H1 (cell line): ENCODE measurements at regions of chr2 and their contacts with region 1.

Region 1: DNA sequence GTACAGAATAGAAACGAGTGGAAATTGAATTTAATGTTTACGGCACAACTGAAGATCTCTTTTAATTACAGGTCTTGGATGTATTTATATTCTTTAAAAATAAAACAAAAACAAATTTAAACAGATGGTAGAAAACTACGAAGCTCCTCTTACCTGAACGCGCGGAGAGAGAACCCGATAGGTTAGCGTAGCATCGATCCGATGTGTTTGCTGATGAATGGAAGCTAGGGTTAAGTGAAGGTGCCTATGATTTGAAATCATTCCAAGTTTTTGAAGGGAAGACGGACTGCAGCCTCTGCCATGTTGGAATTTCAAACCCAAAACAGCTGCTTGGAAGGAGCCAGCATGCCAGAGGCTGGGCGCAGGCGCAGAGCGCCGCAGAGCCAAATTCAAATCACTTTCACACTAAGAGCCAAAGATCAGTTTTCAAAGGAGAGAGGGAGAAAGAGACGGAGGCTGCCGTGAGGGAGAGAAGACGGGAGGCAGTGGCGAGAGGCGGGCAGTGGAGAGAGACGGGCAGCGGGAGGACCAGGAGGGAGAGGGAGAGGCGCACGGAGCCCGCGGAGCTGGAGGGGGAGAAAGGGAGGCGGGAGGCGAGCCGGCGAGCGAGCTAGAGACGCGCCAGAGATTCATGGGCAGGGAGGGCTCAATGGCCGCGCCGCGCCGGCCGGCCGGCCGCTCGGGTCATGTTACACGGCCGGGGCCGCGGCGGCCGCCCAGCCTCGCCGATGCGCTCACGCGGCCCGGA is at the start of gene FIGN:
- DNase-seq: peak; percentile 70 to 83
- H3K4me3 ChIP-seq: peak within 1 kb of the TSS; percentile 54 to 99 (median 80)
- H3K27ac ChIP-seq: peak within 1 kb of the TSS; percentile 97
- H3K4me1 ChIP-seq: peaks cover 0 to 7% (median 1%) of the 10 kb centered on the region in 4 experiments; a peak in 3 of 7 replicates
- H3K27me3 ChIP-seq: no peaks in the 10 kb centered on the region
- CTCF ChIP-seq: 0 out of 4 replicates have a peak, but pooled peaks of 1 of the 3 experiments have one; percentile 2
- EP300 ChIP-seq: no peak
- POLR2A ChIP-seq: peak; percentile 73 to 93
- RAD21 ChIP-seq: 0 out of 4 replicates have a peak, but pooled peaks of 1 of the 2 experiments have one; percentile 10
- total RNA-seq, gene FIGN: 21.5 and 22.8 TPM in 2 replicates

Region 2: DNA sequence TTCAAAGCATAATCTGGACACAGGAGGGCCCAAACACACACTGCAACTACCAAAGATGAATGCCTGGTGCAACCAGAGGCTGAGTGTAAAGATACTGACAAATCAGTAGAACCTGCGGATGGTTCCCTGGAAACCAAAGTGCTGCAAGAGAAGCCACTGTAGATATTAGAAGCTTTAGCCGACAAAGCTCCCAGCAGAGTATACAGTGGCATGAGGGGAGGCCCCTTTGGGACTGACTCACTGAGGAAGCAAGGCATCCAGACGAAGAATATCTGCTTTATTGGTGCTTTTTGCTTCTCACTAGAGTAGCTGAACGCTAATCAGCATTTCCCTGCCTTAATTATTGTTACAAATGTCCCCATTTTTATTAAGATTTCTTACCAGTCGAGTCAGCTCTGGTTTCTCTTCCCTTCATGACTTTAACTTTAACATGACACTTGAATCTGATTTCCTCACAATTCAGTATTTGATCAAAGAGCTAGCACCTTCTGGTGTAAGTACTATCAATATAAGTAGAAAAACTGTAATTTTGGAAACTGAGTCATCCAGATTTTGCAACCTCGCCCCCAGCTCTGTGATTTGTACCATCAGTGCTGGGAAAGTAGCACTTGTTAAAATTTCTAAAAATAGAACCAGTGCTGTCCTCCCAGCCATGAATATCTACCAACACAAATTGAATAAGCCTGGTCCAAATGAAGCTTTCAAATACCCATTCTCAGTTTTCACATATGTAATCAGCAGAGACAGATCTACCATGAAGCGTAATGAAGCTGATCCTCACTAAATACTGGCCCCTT is 34.3 kb before region 1 on chr2:
- CTCF ChIA-PET with region 1: interaction called, 3 read pairs
- POLR2A ChIA-PET with region 1: interaction called, 10 read pairs
- DNase-seq: no peak
- H3K4me3 ChIP-seq: no peak overlapping the region
- H3K27ac ChIP-seq: no peak overlapping the region
- H3K4me1 ChIP-seq: peaks cover 2 to 27% (median 18%) of the 10 kb centered on the region in 4 experiments; a peak in 5 of 7 replicates
- H3K27me3 ChIP-seq: no peaks in the 10 kb centered on the region
- CTCF ChIP-seq: no peak
- EP300 ChIP-seq: no peak
- POLR2A ChIP-seq: no peak
- RAD21 ChIP-seq: no peak